ENCODE measurements at regions of chr5 and their contacts with region 1.

Region 1: DNA sequence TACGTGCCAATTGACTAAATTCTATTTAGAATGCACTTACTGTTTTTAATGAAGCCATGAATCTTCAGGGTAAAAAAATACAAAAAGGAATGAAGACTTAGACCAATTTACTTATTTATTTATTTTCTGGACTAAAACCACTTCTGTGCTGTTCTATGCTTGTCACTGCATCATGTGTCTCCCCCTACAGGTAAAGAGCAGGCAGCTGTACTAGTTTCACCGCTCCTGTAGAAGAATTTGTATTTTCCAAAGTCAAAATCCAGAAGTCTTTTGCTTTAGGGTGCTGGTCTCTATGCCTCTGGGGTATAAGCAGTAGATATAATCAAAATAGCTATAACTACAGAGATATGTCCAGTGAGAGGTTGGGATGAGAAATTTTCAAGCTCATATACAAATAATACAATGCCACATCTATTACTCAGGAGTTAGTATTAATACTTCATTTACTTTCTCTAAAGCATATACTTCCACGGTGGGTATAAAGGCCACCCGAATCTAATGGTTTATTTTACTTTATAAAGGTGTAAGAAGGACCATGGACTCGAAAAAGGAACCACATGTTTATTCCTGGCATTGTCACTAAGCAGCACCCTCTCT is 591.5 kb downstream of the RAB3C start:
- DNase-seq: no peak
- H3K4me3 ChIP-seq: no peak overlapping the region
- H3K27ac ChIP-seq: no peak overlapping the region
- H3K4me1 ChIP-seq: no peaks in the 10 kb centered on the region
- H3K27me3 ChIP-seq: no peaks in the 10 kb centered on the region
- CTCF ChIP-seq: peak; percentile 48 to 66 (median 64)
- POLR2A ChIP-seq: no peak

Region 2: GRCh38 chr5:58886315-58887207 is 287.8 kb before region 1 on chr5:
- intact Hi-C with region 1: loop called (anchors 10 kb)
- DNase-seq: peak; percentile 32 to 43
- H3K4me3 ChIP-seq: no peak overlapping the region
- H3K27ac ChIP-seq: no peak overlapping the region
- H3K4me1 ChIP-seq: no peaks in the 10 kb centered on the region
- H3K27me3 ChIP-seq: no peaks in the 10 kb centered on the region
- CTCF ChIP-seq: peak; percentile 62 to 80 (median 72)
- POLR2A ChIP-seq: no peak

Region 3: GRCh38 chr5:59020611-59021285 is 153.6 kb before region 1 on chr5:
- intact Hi-C with region 1: loop called (anchors 5 kb)
- DNase-seq: no peak
- H3K4me3 ChIP-seq: no peak overlapping the region
- H3K27ac ChIP-seq: no peak overlapping the region
- H3K4me1 ChIP-seq: no peaks in the 10 kb centered on the region
- H3K27me3 ChIP-seq: no peaks in the 10 kb centered on the region
- CTCF ChIP-seq: no peak
- POLR2A ChIP-seq: no peak

Region 4: GRCh38 chr5:59328709-59329296 is 154.5 kb after region 1 on chr5:
- intact Hi-C with region 1: no loop called
- DNase-seq: no peak
- H3K4me3 ChIP-seq: no peak overlapping the region
- H3K27ac ChIP-seq: no peak overlapping the region
- H3K4me1 ChIP-seq: no peaks in the 10 kb centered on the region
- H3K27me3 ChIP-seq: no peaks in the 10 kb centered on the region
- CTCF ChIP-seq: no peak
- POLR2A ChIP-seq: no peak